Dorsolateral prefrontal cortex (tissue), 120 donors: ENCODE measurements at regions of chr15 and their contacts with region 1.

Region 1: DNA sequence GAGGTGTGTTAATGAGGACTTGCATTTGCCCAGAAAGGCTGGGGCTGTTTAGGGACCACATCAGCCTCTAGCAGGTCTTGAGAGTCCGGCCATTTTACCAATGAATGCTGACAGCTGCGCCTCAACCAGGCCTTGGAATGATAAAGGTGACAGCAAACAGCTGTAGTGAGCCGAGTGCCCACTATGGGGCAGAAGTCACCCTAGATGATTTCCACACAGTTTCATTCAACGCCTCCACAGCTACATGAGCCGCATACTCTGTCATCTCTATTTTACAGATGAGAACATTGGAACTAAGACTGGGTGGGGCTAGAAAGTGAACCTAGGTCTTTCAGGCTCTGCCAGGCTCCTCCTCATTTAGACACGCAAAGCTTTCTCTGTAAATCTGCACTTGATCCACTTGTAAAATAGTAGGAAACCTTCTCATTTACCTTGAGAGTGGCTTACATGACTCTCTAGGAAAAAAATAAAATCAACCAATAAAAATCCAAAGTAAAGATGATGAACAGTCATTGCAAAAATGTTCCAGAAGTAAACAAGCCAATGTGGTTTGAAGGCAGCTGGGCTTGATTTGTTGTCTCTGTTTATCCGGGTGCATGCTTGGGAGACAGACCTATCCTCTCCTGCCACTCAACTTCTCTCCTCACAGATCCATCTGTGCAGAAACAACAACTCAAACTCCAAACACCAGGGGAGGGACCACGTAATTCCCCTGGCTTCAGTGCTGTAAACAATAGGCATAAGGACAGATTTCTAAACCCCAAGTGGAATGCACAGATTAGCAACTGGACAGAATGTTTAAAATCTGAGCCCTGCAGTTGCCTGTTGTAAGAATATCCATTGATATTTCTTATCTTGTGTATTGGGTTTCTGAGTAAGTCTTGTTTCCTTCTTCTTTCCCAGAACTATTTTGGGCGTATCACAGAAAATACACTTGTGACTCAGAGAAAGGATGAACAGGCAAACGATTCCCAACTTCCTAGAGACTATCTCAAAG is 31.5 kb upstream of the LDHAL6B start:
- DNase-seq: peak in 9 of 10 donors; percentile 51 to 84 (median 71)
- H3K4me3 ChIP-seq: peak overlapping the region in 2 of 59 donors; percentile 7 to 10
- H3K27ac ChIP-seq: peak overlapping the region in 58 of 59 donors; percentile 24 to 92 (median 83)
- H3K27me3 ChIP-seq: no peaks in the 10 kb centered on the region
- CTCF ChIP-seq: peak; percentile 28 to 85 (median 74)

Region 2: DNA sequence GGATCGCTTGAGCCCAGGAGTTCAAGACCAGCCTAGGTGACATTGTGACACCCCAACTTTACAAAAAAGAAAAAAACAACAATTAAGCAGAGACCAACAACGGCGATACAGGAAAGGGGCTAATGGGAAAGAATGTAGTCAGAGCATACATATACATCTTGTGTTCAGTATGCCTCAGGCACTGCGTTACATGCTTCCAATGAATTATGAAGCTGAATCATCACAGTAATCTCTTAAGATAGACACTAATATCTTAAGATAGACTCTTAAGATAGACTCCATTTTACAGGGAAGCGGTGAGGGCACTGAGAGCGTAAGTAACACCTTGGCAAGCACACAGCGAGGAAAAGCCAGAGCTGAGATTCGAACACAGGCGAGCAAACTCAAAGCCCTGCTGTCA is 25.4 kb after region 1 on chr15:
- intact Hi-C with region 1: no loop called
- DNase-seq: no peak
- H3K4me3 ChIP-seq: no peak overlapping the region
- H3K27ac ChIP-seq: no peak overlapping the region
- H3K27me3 ChIP-seq: no peaks in the 10 kb centered on the region
- CTCF ChIP-seq: no peak

Region 3: DNA sequence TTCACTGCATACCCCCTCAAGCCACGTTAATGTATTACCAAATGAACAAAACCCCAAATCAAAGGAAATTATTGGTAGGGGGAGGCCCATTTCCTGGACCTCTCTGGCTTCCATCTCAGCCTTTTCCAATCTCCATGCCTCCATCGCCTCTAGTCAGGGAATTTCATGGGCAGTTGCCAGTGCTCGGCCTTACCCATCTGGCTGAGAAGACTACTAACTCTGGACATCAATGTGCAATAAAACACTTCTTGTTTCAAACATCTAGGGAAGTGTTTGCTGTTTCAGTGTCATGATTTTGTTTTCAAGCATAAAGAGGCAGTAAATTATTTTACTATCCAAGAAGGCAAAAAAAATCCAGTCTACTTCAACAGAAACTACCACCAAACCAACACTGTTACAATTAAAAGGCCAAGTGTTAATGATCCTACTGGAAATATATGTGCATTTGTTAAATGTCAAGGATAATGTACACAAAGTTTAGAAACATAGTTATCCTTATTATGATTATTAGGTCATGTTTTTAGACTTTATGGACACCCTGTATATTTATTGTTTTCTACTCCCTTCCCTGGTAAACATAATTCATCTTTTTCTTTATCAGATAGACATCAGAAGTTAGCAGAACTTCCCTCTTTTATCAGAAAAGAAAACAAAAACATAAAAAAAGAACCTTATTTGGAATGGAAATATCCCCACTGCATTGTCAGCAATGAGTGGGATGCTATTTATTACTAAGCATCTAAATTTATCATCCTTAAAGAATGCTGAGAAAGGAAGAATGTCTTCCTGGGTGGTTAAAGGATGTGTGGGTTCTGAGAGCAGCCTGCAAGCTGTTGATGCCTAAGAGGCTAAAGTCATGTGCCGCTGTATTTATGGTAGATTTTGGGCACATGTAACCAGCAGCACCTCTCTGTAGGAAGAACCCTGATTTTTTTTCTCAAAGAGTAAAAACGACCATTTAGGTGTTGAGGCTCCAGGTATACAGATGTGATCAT is 46.7 kb after region 1 on chr15:
- intact Hi-C with region 1: loop called in 1 of 2 experiments (anchors 10 kb)
- DNase-seq: peak in 1 of 10 donors; percentile 29
- H3K4me3 ChIP-seq: no peak overlapping the region
- H3K27ac ChIP-seq: peak overlapping the region in 55 of 59 donors; percentile 11 to 83 (median 66)
- H3K27me3 ChIP-seq: no peaks in the 10 kb centered on the region
- CTCF ChIP-seq: no peak

Region 4: GRCh38 chr15:59294568-59295260 is 119.6 kb after region 1 on chr15:
- intact Hi-C with region 1: loop called in 1 of 2 experiments (anchors 5 kb)
- DNase-seq: no peak
- H3K4me3 ChIP-seq: no peak overlapping the region
- H3K27ac ChIP-seq: peak overlapping the region in 53 of 59 donors; percentile 11 to 99 (median 90)
- H3K27me3 ChIP-seq: no peaks in the 10 kb centered on the region
- CTCF ChIP-seq: no peak

Region 5: DNA sequence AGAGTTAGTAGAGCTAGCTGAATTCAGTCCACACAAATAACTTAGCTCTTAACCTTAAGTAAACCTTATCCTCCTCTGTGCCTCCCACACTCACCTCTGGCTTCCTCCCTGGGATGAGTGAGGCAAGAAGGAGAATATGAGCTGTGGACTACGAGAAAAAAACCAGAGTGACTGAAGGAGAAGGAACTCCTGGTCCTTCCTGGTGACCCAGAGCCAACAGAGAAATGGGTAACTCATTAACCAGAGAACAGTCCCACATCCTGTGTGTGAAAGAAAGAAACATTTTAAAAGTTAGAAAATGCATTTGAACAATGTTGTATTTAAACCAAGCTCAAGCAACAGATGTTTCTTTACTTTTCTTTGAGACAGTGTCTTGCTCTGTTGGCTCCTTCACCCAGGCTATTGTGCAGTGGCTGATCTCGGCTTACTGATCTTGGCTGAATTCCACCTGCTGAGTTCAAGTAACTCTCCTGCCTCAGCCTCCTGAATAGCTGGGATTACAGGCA is 235.3 kb after region 1 on chr15:
- intact Hi-C with region 1: loop called (anchors 10 kb)
- DNase-seq: no peak
- H3K4me3 ChIP-seq: no peak overlapping the region
- H3K27ac ChIP-seq: no peak overlapping the region
- H3K27me3 ChIP-seq: no peaks in the 10 kb centered on the region
- CTCF ChIP-seq: no peak